Endothelial cell of umbilical vein (primary cell): ENCODE measurements at regions of chr7 and their contacts with region 1.

Region 1: DNA sequence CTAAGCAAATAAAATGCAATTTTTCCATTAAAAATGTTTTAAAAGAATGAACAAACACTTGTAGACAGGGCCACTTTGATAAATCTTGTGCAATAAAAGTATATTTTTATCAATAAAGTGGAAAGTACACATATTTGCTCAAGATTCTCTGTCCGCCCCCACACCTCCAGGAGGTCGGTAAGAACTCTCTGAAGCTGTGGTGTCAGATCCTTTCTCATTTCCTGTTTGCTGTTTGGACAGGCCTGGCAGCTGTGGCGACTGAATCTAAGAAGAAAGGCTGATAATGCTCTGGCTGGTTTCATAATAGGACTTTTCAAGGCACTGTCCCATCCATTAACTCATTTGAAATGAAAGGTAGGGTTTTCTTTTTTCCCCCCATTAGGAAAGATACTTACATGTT is 15.3 kb upstream of the ASB4 start:
- DNase-seq: peak; percentile 64
- H3K4me3 ChIP-seq: peak overlapping the region in 1 of 3 experiments; percentile 16
- H3K27ac ChIP-seq: peak overlapping the region; percentile 65
- H3K4me1 ChIP-seq: peaks cover 30% of the 10 kb centered on the region
- H3K27me3 ChIP-seq: peaks cover 0 to 2% of the 10 kb centered on the region in 2 experiments
- CTCF ChIP-seq: no peak
- POLR2A ChIP-seq: no peak

Region 2: GRCh38 chr7:95434557-95435421 is 35.7 kb before region 1 on chr7 and contains the start of gene PON2:
- CTCF ChIA-PET with region 1: interaction called, 7 read pairs
- POLR2A ChIA-PET with region 1: no interaction called
- dilution Hi-C with region 1: no loop called
- intact Hi-C with region 1: loop called (anchors 1 kb)
- DNase-seq: peak; percentile 84
- H3K4me3 ChIP-seq: peak within 1 kb of the TSS; percentile 74 to 97 (median 89)
- H3K27ac ChIP-seq: peak within 1 kb of the TSS; percentile 78
- H3K4me1 ChIP-seq: peaks cover 18% of the 10 kb centered on the region
- H3K27me3 ChIP-seq: no peaks in the 10 kb centered on the region
- CTCF ChIP-seq: no peak
- POLR2A ChIP-seq: peak; percentile 98
- total RNA-seq, gene PON2: 125 and 134 TPM in 2 replicates

Region 3: GRCh38 chr7:95700917-95701316 is 230.5 kb after region 1 on chr7:
- CTCF ChIA-PET with region 1: no interaction called
- POLR2A ChIA-PET with region 1: no interaction called
- dilution Hi-C with region 1: no loop called
- intact Hi-C with region 1: no loop called
- DNase-seq: no peak
- H3K4me3 ChIP-seq: no peak overlapping the region
- H3K27ac ChIP-seq: no peak overlapping the region
- H3K4me1 ChIP-seq: no peaks in the 10 kb centered on the region
- H3K27me3 ChIP-seq: peaks cover 0 to 4% of the 10 kb centered on the region in 2 experiments
- CTCF ChIP-seq: no peak
- POLR2A ChIP-seq: no peak